Activated CD4-positive, alpha-beta T cell treated with anti-CD3 and anti-CD28 coated beads for 36 hours (primary cell): ENCODE measurements at regions of chr6 and their contacts with region 1.

Region 1: DNA sequence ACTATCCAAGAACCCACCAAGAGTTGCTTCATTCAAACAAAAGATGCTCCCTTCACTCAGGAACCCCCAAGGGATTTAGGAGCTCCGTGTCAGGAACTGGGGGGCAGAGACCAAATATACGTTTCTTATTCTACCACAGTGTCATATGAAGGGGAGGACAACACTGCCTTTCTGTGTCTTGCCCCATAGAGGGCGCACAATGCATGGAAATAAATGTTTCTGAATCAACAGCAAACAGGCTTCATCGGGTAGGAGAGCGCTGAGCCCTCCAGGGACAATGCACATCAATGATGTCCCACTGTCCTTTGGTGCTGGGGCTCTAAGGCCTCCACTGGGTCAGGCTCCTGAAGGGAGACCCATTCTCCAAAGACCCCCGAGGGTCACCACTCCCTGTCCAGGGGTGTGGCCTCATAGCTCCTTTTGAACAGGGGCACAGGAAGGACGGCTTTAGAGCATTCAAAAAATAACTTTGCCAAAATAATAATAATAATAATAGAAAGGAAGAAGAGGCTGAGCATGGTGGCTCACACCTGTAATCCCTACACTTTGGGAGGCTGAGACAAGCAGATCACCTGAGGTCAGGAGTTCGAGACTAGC is 31.1 kb downstream of the PLG start:
- DNase-seq: peak; percentile 51
- ATAC-seq: peak; percentile 57
- H3K4me3 Mint-ChIP-seq: no peak overlapping the region
- H3K27ac Mint-ChIP-seq: no peak overlapping the region
- H3K4me1 Mint-ChIP-seq: no peaks in the 10 kb centered on the region
- H3K27me3 Mint-ChIP-seq: peaks cover 7% of the 10 kb centered on the region

Region 2: GRCh38 chr6:160766989-160767660 is 34.0 kb after region 1 on chr6:
- CTCF ChIA-PET with region 1: interaction called, 4 read pairs
- POLR2A ChIA-PET with region 1: no interaction called
- intact Hi-C with region 1: loop called (anchors 1 kb)
- DNase-seq: peak; percentile 75
- ATAC-seq: peak; percentile 86
- H3K4me3 Mint-ChIP-seq: peak overlapping the region; percentile 60
- H3K27ac Mint-ChIP-seq: no peak overlapping the region
- H3K4me1 Mint-ChIP-seq: peaks cover 7% of the 10 kb centered on the region
- H3K27me3 Mint-ChIP-seq: peaks cover 33% of the 10 kb centered on the region

Region 3: GRCh38 chr6:160919723-160920440 is 186.7 kb after region 1 on chr6:
- CTCF ChIA-PET with region 1: no interaction called
- POLR2A ChIA-PET with region 1: no interaction called
- intact Hi-C with region 1: loop called in 1 of 2 experiments (anchors 10 kb)
- DNase-seq: no peak
- ATAC-seq: no peak
- H3K4me3 Mint-ChIP-seq: no peak overlapping the region
- H3K27ac Mint-ChIP-seq: no peak overlapping the region
- H3K4me1 Mint-ChIP-seq: no peaks in the 10 kb centered on the region
- H3K27me3 Mint-ChIP-seq: peaks cover 11% of the 10 kb centered on the region